Stomach (tissue), 19 donors: ENCODE measurements at regions of chr6 and their contacts with region 1.

Region 1: GRCh38 chr6:138773177-138774091 is at the start of gene CCDC28A:
- DNase-seq: peak; percentile 93 to 98
- H3K4me3 ChIP-seq: peak within 1 kb of the TSS; percentile 78 to 92 (median 85)
- H3K27ac ChIP-seq: peak within 1 kb of the TSS; percentile 92 to 99 (median 95)
- H3K4me1 ChIP-seq: peaks cover 9 to 29% (median 23%) of the 10 kb centered on the region in 4 donors
- H3K27me3 ChIP-seq: no peaks in the 10 kb centered on the region
- CTCF ChIP-seq: no peak
- EP300 ChIP-seq: no peak
- POLR2A ChIP-seq: no peak
- total RNA-seq, gene CCDC28A: 0.58 to 39.3 (median 22.0) TPM

Region 2: DNA sequence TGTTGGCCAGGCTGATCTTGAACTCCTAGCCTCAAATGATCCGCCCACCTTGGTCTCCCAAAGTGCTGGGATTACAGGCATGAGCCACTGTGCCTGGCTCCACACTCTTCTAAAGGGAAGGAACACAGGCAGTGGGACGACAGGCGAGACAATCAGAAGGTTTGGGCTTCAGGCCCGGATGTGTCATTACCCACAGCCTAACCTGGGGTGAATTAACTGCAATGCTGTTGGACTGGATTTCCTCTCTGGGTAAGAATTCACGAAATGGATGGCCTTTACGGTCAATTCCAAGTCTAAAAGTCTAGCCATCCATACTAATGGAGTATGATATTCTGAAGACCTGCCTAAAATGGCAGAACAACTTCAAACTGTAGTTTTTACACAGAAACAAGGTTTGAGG is 83.6 kb before region 1 on chr6:
- intact Hi-C with region 1: loop called (anchors 5 kb)
- DNase-seq: no peak
- H3K4me3 ChIP-seq: no peak overlapping the region
- H3K27ac ChIP-seq: no peak overlapping the region
- H3K4me1 ChIP-seq: peaks cover 0 to 20% (median 13%) of the 10 kb centered on the region in 4 donors
- H3K27me3 ChIP-seq: peaks cover 0 to 6% (median 0%) of the 10 kb centered on the region in 3 donors
- CTCF ChIP-seq: no peak
- EP300 ChIP-seq: no peak
- POLR2A ChIP-seq: no peak